Mammary epithelial cell (primary cell): ENCODE measurements at regions of chr2 and their contacts with region 1.

Region 1: GRCh38 chr2:11234309-11234708 is 79.0 kb downstream of the SLC66A3 start:
- DNase-seq: no peak
- H3K4me3 ChIP-seq: no peak overlapping the region
- H3K27ac ChIP-seq: no peak overlapping the region
- H3K4me1 ChIP-seq: no peaks in the 10 kb centered on the region
- H3K27me3 ChIP-seq: no peaks in the 10 kb centered on the region
- CTCF ChIP-seq: peak; percentile 34 to 39

Region 2: GRCh38 chr2:11411768-11412448 is 177.6 kb after region 1 on chr2:
- CTCF ChIA-PET with region 1: interaction called, 7 read pairs
- dilution Hi-C with region 1: no loop called
- in situ Hi-C with region 1: loop called (anchors 10 kb)
- intact Hi-C with region 1: loop called (anchors 1 kb)
- DNase-seq: no peak
- H3K4me3 ChIP-seq: no peak overlapping the region
- H3K27ac ChIP-seq: no peak overlapping the region
- H3K4me1 ChIP-seq: no peaks in the 10 kb centered on the region
- H3K27me3 ChIP-seq: no peaks in the 10 kb centered on the region
- CTCF ChIP-seq: peak; percentile 72 to 84

Region 3: DNA sequence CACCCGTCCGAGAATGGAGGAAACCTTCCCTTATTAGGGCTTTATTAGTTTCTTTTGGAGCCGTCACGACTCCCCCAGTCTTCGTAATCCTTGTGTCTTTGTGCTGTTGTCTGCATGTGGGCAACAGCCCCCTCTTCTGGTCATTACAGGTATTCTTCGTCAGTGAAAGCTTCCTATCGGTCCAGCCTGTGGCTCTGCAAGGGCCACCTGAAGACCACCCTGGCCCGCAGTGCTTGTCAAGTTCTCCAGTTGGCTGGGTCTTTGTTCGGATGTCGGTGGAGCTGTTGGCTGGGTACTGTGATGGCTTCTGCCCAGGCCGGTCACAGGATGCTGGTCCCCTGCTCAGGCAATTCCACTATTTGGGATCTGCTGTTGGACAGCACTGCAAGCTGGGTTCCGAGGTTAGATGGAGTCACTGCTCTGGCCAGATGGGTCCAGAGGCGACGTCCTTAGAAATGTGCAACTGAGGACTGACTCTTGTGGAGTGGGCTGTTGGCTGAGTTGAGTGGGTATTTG is 212.5 kb after region 1 on chr2:
- CTCF ChIA-PET with region 1: no interaction called
- dilution Hi-C with region 1: no loop called
- in situ Hi-C with region 1: no loop called
- intact Hi-C with region 1: loop called (anchors 1 kb)
- DNase-seq: peak; percentile 48
- H3K4me3 ChIP-seq: no peak overlapping the region
- H3K27ac ChIP-seq: no peak overlapping the region
- H3K4me1 ChIP-seq: no peaks in the 10 kb centered on the region
- H3K27me3 ChIP-seq: no peaks in the 10 kb centered on the region
- CTCF ChIP-seq: peak; percentile 71 to 88

Region 4: GRCh38 chr2:11583840-11584524 is 349.7 kb after region 1 on chr2:
- CTCF ChIA-PET with region 1: no interaction called
- dilution Hi-C with region 1: no loop called
- in situ Hi-C with region 1: no loop called
- intact Hi-C with region 1: loop called (anchors 1 kb)
- DNase-seq: peak; percentile 95
- H3K4me3 ChIP-seq: no peak overlapping the region
- H3K27ac ChIP-seq: peak overlapping the region; percentile 30
- H3K4me1 ChIP-seq: peaks cover 4% of the 10 kb centered on the region
- H3K27me3 ChIP-seq: no peaks in the 10 kb centered on the region
- CTCF ChIP-seq: peak; percentile 78 to 92

Region 5: GRCh38 chr2:11764359-11764758 is 530.0 kb after region 1 on chr2:
- CTCF ChIA-PET with region 1: no interaction called
- dilution Hi-C with region 1: no loop called
- in situ Hi-C with region 1: no loop called
- intact Hi-C with region 1: no loop called
- DNase-seq: no peak
- H3K4me3 ChIP-seq: no peak overlapping the region
- H3K27ac ChIP-seq: no peak overlapping the region
- H3K4me1 ChIP-seq: no peaks in the 10 kb centered on the region
- H3K27me3 ChIP-seq: no peaks in the 10 kb centered on the region
- CTCF ChIP-seq: no peak